ENCODE measurements at regions of chr12 and their contacts with region 1.

Region 1: DNA sequence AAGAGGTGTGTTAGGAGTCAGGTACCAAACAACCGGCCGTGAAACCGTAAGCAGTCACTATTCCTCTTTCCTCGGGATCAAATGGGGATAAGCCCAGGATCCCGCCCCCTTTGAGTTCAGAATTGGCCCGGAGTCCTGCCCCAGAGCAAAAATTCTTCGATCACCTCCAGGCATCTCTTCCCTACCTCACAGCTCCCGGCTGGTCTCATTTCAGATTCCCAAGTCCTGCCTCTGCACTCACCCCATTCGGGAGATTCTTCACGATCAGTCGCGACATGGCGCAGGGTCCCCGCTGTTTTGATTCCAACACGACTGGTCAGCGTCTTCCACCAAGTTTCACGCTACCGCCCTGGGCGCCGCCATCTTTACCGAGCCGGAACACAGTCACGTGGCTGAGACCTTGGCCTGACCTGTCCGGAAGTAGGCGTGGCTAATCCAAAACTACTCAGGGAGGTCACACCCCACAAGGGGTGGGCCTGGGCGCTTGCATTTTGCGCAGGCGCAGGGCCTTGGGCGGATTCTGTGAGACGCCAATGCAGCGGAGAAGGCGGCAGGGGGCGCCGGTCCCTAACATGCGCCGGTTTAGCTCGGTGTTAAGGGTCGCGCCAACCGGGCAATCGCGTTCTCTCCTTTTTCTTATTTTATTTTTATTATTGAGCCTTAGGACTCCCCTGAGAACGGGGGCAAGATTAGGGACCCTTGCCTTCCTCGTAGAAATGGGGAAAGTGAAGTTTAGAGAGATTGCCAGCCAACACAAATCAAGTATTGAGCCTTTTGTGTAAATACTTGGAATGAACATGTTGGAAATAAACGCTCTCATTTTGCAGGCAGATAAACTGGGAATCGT is at the start of gene RBM19:
- DNase-seq: peak; percentile 93 to 99 (median 98)
- ATAC-seq: peak; percentile 98
- H3K4me3 ChIP-seq: peak within 1 kb of the TSS; percentile 76 to 95
- H3K4me3 Mint-ChIP-seq: peak within 1 kb of the TSS; percentile 98
- H3K27ac ChIP-seq: peak within 1 kb of the TSS; percentile 62 to 63
- H3K27ac Mint-ChIP-seq: peak within 1 kb of the TSS; percentile 95
- H3K4me1 ChIP-seq: peaks cover 16% of the 10 kb centered on the region
- H3K4me1 Mint-ChIP-seq: peaks cover 56% of the 10 kb centered on the region
- H3K27me3 ChIP-seq: no peaks in the 10 kb centered on the region
- H3K27me3 Mint-ChIP-seq: no peaks in the 10 kb centered on the region
- CTCF ChIP-seq: peak; percentile 88
- total RNA-seq, gene RBM19: 57.7 to 59.9 TPM

Region 2: GRCh38 chr12:113056631-113057488 is 909.3 kb before region 1 on chr12 and contains the start of gene DTX1:
- CTCF ChIA-PET with region 1: no interaction called
- POLR2A ChIA-PET with region 1: no interaction called
- intact Hi-C with region 1: no loop called
- DNase-seq: peak in 6 of 9 experiments; percentile 20 to 57 (median 42)
- ATAC-seq: peak; percentile 75
- H3K4me3 ChIP-seq: peak within 1 kb of the TSS; percentile 52 to 57
- H3K4me3 Mint-ChIP-seq: peak within 1 kb of the TSS; percentile 83
- H3K27ac ChIP-seq: no peak within 1 kb of the TSS
- H3K27ac Mint-ChIP-seq: peak within 1 kb of the TSS; percentile 57
- H3K4me1 ChIP-seq: peaks cover 23% of the 10 kb centered on the region
- H3K4me1 Mint-ChIP-seq: peaks cover 27% of the 10 kb centered on the region
- H3K27me3 ChIP-seq: no peaks in the 10 kb centered on the region
- H3K27me3 Mint-ChIP-seq: no peaks in the 10 kb centered on the region
- CTCF ChIP-seq: no peak
- total RNA-seq, gene DTX1: 4.6 to 4.7 TPM

Region 3: GRCh38 chr12:113334786-113335540 is 631.2 kb before region 1 on chr12 and contains the start of gene SLC8B1:
- CTCF ChIA-PET with region 1: interaction called, 3 read pairs
- POLR2A ChIA-PET with region 1: no interaction called
- intact Hi-C with region 1: loop called (anchors 2 to 5 kb)
- DNase-seq: peak; percentile 74 to 95 (median 86)
- ATAC-seq: peak; percentile 99
- H3K4me3 ChIP-seq: peak within 1 kb of the TSS; percentile 80 to 89
- H3K4me3 Mint-ChIP-seq: peak within 1 kb of the TSS; percentile 92
- H3K27ac ChIP-seq: peak within 1 kb of the TSS; percentile 31 to 51
- H3K27ac Mint-ChIP-seq: peak within 1 kb of the TSS; percentile 88
- H3K4me1 ChIP-seq: peaks cover 17% of the 10 kb centered on the region
- H3K4me1 Mint-ChIP-seq: peaks cover 41% of the 10 kb centered on the region
- H3K27me3 ChIP-seq: no peaks in the 10 kb centered on the region
- H3K27me3 Mint-ChIP-seq: no peaks in the 10 kb centered on the region
- CTCF ChIP-seq: no peak
- total RNA-seq, gene SLC8B1: 67.3 to 72.8 TPM

Region 4: GRCh38 chr12:113358381-113359132 is 607.6 kb before region 1 on chr12 and contains the start of gene PLBD2:
- CTCF ChIA-PET with region 1: no interaction called
- POLR2A ChIA-PET with region 1: no interaction called
- intact Hi-C with region 1: loop called in 1 of 2 experiments (anchors 5 kb)
- DNase-seq: peak; percentile 92 to 97 (median 94)
- ATAC-seq: peak; percentile 97
- H3K4me3 ChIP-seq: peak within 1 kb of the TSS; percentile 72 to 79
- H3K4me3 Mint-ChIP-seq: peak within 1 kb of the TSS; percentile 91
- H3K27ac ChIP-seq: peak within 1 kb of the TSS; percentile 81 to 84
- H3K27ac Mint-ChIP-seq: peak within 1 kb of the TSS; percentile 96
- H3K4me1 ChIP-seq: peaks cover 14% of the 10 kb centered on the region
- H3K4me1 Mint-ChIP-seq: peaks cover 16% of the 10 kb centered on the region
- H3K27me3 ChIP-seq: peaks cover 0 to 2% of the 10 kb centered on the region in 2 experiments
- H3K27me3 Mint-ChIP-seq: no peaks in the 10 kb centered on the region
- CTCF ChIP-seq: no peak
- total RNA-seq, gene PLBD2: 9.2 to 9.9 TPM

Region 5: DNA sequence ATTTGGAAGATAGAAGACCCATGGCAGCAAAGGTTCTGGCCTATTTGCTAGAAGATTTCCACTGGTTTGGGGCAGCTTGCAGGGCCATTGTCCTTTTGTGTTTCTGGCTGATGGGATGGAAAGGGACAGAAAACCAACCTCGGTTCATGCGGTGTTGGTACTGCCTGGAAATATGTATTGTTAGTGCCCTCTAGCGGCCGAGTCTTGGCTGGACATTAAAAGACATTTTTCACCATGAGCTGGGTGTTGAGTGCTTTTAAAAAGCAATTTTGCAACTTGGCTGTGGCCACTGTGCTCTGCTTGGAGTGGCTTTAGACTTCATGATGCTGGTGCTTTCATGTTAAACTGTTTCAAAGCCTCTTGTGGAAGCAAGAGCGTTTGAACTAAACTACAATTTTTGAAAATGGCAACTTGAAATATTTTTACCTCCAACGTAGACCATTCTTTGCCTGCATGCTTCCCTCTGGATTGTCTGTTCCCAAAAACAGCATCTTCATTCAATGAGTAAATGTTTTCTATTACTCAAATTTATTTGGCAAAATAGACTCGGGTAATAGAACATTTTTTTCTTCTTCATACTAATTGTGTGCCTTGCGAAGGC is 542.5 kb after region 1 on chr12:
- CTCF ChIA-PET with region 1: interaction called, 14 read pairs
- POLR2A ChIA-PET with region 1: no interaction called
- intact Hi-C with region 1: loop called in 1 of 2 experiments (anchors 1 kb)
- DNase-seq: peak; percentile 16 to 69 (median 50)
- ATAC-seq: no peak
- H3K4me3 ChIP-seq: no peak overlapping the region
- H3K4me3 Mint-ChIP-seq: no peak overlapping the region
- H3K27ac ChIP-seq: no peak overlapping the region
- H3K27ac Mint-ChIP-seq: no peak overlapping the region
- H3K4me1 ChIP-seq: no peaks in the 10 kb centered on the region
- H3K4me1 Mint-ChIP-seq: no peaks in the 10 kb centered on the region
- H3K27me3 ChIP-seq: no peaks in the 10 kb centered on the region
- H3K27me3 Mint-ChIP-seq: peaks cover 15% of the 10 kb centered on the region
- CTCF ChIP-seq: peak; percentile 63

Region 6: DNA sequence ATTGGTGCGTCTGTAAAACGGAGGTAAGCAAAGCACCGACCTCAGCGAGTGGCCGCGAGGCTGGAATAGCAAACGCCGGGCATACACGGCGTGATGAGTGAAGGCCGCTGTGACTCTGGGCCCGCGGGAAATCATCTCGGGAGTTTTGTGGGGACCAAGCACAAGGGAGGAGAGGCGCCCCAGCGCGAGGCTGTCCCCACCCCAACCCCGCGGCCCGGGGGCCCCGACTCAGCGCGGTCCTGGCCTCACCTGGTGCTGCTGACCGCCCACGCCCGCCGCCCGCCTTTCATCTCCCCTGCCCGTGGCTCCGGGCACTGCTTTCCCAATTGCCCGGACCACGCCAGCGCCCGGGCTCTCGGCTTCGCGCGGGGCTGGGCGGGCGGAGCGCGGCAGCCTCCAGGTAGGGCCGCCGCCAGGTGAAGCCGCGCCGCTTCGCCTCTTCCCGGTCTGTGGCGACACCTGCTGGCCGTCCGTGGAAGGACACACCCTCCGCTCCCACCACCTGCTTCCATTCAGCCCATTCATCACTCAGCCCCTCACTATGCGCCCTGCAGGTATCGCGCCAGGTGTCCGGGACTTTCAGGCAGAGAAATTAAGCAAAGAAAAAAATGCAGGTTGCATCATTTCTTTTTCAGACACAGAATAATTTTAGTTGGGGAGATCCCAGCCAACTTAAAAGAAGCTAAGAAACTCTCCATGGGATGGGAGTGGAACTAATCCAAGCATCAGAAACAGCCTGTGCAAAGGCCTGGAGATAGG is 1950.9 kb after region 1 on chr12:
- CTCF ChIA-PET with region 1: no interaction called
- POLR2A ChIA-PET with region 1: no interaction called
- intact Hi-C with region 1: loop called in 1 of 2 experiments (anchors 1 kb)
- DNase-seq: peak; percentile 48 to 84 (median 70)
- ATAC-seq: peak; percentile 84
- H3K4me3 ChIP-seq: no peak overlapping the region
- H3K4me3 Mint-ChIP-seq: peak overlapping the region; percentile 13
- H3K27ac ChIP-seq: no peak overlapping the region
- H3K27ac Mint-ChIP-seq: no peak overlapping the region
- H3K4me1 ChIP-seq: no peaks in the 10 kb centered on the region
- H3K4me1 Mint-ChIP-seq: peaks cover 5% of the 10 kb centered on the region
- H3K27me3 ChIP-seq: peaks cover 4 to 11% of the 10 kb centered on the region in 2 experiments
- H3K27me3 Mint-ChIP-seq: peaks cover 67% of the 10 kb centered on the region
- CTCF ChIP-seq: peak; percentile 99

Measured in CD8-positive, alpha-beta T cell (primary cell).